HepG2 (cell line): ENCODE measurements at regions of chr2 and their contacts with region 1.

Region 1: DNA sequence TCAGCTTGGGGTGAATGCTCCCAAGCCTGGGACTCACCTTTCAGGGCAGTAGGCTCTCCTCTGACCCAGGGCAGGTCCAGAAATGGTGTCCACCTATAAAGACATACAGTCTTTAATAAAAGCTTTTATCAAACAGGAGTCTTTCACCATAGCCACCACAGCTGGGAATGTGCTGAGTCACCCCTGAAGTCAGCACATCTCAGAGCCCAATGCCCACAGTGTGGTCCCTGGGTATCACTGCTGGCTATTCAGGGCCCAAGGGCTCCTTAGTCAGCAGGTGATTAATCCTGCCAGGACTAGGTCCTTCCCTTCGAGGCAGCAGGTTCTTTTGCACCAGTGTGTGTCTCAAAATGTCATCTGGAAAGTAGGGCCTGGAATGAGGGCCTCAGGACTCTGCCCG is 181.9 kb downstream of the MEMO1 start:
- DNase-seq: no peak
- ATAC-seq: peak; percentile 50
- H3K4me3 ChIP-seq: no peak overlapping the region
- H3K27ac ChIP-seq: no peak overlapping the region
- H3K4me1 ChIP-seq: no peaks in the 10 kb centered on the region
- H3K27me3 ChIP-seq: no peaks in the 10 kb centered on the region
- CTCF ChIP-seq: no peak
- EP300 ChIP-seq: no peak
- POLR2A ChIP-seq: no peak
- RAD21 ChIP-seq: no peak

Region 2: DNA sequence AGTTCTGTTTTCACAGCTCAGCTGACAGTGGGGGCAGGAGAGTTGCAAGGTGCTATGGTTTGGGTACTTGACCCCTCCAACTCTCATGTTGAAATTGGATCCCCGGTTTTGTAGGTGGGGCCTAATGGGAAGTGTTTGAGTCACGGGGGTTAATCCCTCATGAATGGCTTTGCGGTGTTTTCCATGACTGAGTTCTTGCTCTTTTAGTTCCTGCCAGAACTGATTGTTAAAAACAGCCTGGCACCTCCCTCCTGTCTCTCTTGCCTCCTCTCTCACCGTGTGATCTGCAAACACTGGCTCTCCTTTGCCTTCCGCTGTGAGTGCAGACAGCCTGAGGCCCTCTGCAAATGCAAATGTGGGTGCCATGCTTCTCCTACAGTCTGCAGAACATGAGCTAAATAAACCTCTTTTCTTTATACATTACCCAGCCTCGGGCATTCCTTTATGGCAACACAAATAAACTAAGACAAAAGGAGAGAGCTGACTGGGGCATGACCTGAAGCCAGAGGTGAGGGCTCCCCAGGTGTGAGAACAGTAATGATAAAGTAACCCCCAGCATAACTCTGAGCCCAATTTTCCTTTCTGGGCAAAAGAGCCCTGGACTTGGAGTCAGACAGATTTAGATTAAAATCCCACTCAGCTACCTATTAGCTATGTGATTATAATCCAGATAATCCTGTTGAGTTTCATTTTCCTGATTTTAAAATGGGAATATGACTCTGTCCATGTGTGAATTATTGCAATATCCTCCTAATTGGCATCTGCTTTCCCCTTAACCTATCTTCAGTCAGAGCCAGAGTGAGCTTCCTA is 956.7 kb before region 1 on chr2:
- CTCF ChIA-PET with region 1: no interaction called
- POLR2A ChIA-PET with region 1: no interaction called
- in situ Hi-C with region 1: no loop called
- intact Hi-C with region 1: loop called (anchors 5 kb)
- DNase-seq: no peak
- ATAC-seq: no peak
- H3K4me3 ChIP-seq: no peak overlapping the region
- H3K27ac ChIP-seq: no peak overlapping the region
- H3K4me1 ChIP-seq: no peaks in the 10 kb centered on the region
- H3K27me3 ChIP-seq: peaks cover 0 to 7% of the 10 kb centered on the region in 2 experiments; a peak in 2 of 5 replicates
- CTCF ChIP-seq: no peak
- EP300 ChIP-seq: no peak
- POLR2A ChIP-seq: no peak
- RAD21 ChIP-seq: no peak

Region 3: GRCh38 chr2:31688282-31688681 is 140.6 kb before region 1 on chr2:
- CTCF ChIA-PET with region 1: no interaction called
- POLR2A ChIA-PET with region 1: no interaction called
- in situ Hi-C with region 1: loop called (anchors 25 kb)
- intact Hi-C with region 1: no loop called
- DNase-seq: no peak
- ATAC-seq: no peak
- H3K4me3 ChIP-seq: no peak overlapping the region
- H3K27ac ChIP-seq: no peak overlapping the region
- H3K4me1 ChIP-seq: peaks cover 8% of the 10 kb centered on the region
- H3K27me3 ChIP-seq: no peaks in the 10 kb centered on the region
- CTCF ChIP-seq: peak; percentile 67
- EP300 ChIP-seq: no peak
- POLR2A ChIP-seq: no peak
- RAD21 ChIP-seq: no peak